Naive thymus-derived CD8-positive, alpha-beta T cell (primary cell): ENCODE measurements at regions of chr1 and their contacts with region 1.

Region 1: GRCh38 chr1:2545759-2546514 is 10.2 kb upstream of the TNFRSF14 start:
- DNase-seq: peak; percentile 83 to 93 (median 88)
- ATAC-seq: peak; percentile 47 to 54
- H3K4me3 Mint-ChIP-seq: peak overlapping the region; percentile 57 to 96 (median 92)
- H3K27ac Mint-ChIP-seq: peak overlapping the region in 6 of 10 donors; percentile 10 to 99 (median 98)
- H3K4me1 Mint-ChIP-seq: peaks cover 7 to 49% (median 37%) of the 10 kb centered on the region in 4 donors
- H3K27me3 Mint-ChIP-seq: no peaks in the 10 kb centered on the region

Region 2: DNA sequence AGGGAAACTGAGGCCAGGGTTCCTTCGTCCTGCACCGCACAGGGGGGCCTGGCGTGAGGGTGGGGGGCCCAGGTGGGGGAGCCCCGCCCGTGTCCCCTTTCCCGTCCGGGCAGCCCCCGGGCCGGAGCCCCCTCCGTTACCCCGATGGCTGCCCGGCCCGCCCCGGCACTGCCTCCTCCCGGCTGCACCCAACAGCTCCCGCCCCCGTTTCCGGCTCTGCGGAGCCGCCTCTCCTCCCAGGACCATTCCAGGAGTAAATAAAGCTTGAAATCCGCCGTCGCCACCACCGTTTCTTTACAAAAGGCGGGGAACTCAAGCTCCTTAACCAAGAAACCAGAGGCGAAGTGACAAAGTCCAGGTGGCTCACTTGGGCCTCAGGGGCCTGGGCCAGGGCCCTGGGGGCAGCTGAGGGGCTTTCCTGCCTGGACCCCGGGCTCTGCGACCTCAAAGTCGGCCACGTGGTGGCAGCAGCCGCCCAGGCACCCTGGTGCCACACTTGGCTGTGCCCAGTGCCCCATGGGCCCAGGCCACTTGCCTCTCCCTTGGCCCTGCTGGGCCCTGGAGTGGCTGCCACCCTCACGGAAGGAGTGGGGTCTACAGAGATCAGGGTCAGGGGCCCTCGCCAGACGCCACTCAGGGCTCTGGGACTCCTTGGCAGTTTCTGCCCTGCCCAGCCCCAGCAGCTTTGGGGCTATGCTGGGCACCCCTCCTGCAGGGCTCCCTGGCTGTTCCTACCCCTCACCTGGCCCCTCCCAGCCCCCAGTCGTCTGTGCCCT is 350.9 kb before region 1 on chr1:
- POLR2A ChIA-PET with region 1: interaction called, 29 read pairs
- DNase-seq: peak; percentile 81 to 100 (median 88)
- ATAC-seq: peak; percentile 81 to 82
- H3K4me3 Mint-ChIP-seq: peak overlapping the region; percentile 75 to 91 (median 85)
- H3K27ac Mint-ChIP-seq: peak overlapping the region; percentile 53 to 97 (median 92)
- H3K4me1 Mint-ChIP-seq: peaks cover 5 to 46% (median 33%) of the 10 kb centered on the region in 4 donors
- H3K27me3 Mint-ChIP-seq: no peaks in the 10 kb centered on the region

Region 3: GRCh38 chr1:2391041-2391930 is 154.7 kb before region 1 on chr1 and contains the starts of genes MORN1 and RER1:
- POLR2A ChIA-PET with region 1: interaction called, 16 read pairs
- DNase-seq: peak; percentile 90 to 100 (median 99)
- ATAC-seq: peak; percentile 95 to 96
- H3K4me3 Mint-ChIP-seq: peak within 1 kb of the TSS; percentile 82 to 94 (median 90)
- H3K27ac Mint-ChIP-seq: peak within 1 kb of the TSS; percentile 87 to 94 (median 92)
- H3K4me1 Mint-ChIP-seq: peaks cover 22 to 43% (median 37%) of the 10 kb centered on the region in 4 donors
- H3K27me3 Mint-ChIP-seq: no peaks in the 10 kb centered on the region
- polyA plus RNA-seq, gene MORN1: 4.3 to 7.1 (median 5.0) TPM
- polyA plus RNA-seq, gene RER1: 118 to 146 (median 126) TPM

Region 4: GRCh38 chr1:2494323-2494693 is 51.6 kb before region 1 on chr1:
- POLR2A ChIA-PET with region 1: interaction called, 25 read pairs
- DNase-seq: no peak
- ATAC-seq: no peak
- H3K4me3 Mint-ChIP-seq: peak overlapping the region in 7 of 10 donors; percentile 55 to 80 (median 72)
- H3K27ac Mint-ChIP-seq: peak overlapping the region; percentile 82 to 95 (median 92)
- H3K4me1 Mint-ChIP-seq: peaks cover 20 to 63% (median 38%) of the 10 kb centered on the region in 4 donors
- H3K27me3 Mint-ChIP-seq: no peaks in the 10 kb centered on the region

Region 5: GRCh38 chr1:2525920-2526823 is 19.8 kb before region 1 on chr1 and contains the start of gene PANK4:
- POLR2A ChIA-PET with region 1: interaction called, 528 read pairs
- DNase-seq: peak; percentile 79 to 91 (median 88)
- ATAC-seq: peak; percentile 77 to 85
- H3K4me3 Mint-ChIP-seq: peak within 1 kb of the TSS; percentile 88 to 99 (median 92)
- H3K27ac Mint-ChIP-seq: peak within 1 kb of the TSS; percentile 79 to 99 (median 96)
- H3K4me1 Mint-ChIP-seq: peaks cover 32 to 58% (median 49%) of the 10 kb centered on the region in 4 donors
- H3K27me3 Mint-ChIP-seq: peaks cover 0 to 6% (median 3%) of the 10 kb centered on the region in 5 donors
- polyA plus RNA-seq, gene PANK4: 9.0 to 31.7 (median 13.4) TPM

Region 6: DNA sequence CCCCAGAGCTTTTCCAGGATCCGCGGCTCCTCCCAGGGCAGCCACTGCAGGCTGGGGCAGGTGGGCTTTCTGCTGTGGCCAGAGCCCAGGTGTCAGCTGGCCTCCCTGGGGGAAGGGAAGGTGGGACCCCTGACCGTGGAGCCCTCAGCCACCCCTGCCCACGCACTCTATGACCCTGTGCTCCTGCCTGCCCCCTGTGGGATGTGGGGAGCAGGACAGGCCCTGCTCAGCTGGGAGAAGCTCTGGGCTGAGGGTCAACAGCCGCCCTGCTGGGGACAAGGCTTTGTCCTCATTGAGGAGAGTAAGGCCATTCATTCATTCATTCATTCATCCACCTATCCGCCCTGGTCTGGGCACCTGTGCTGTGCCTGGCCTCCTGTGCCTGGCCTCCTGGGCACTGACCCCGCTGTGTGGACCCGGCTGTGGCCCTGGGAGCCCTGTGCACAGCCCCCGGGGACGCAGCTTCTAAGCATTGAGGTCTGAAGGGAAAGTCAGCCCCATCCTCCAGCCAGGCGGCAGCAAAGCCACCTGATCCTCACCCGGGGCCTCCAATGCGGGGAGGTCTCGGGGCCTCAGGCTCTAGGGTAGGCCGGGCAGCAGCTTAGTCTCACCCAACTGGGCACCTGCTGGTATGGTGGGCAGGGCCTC is 16.1 kb after region 1 on chr1:
- POLR2A ChIA-PET with region 1: interaction called, 51 read pairs
- DNase-seq: peak in 1 of 10 donors; percentile 61
- ATAC-seq: peak; percentile 61 to 65
- H3K4me3 Mint-ChIP-seq: no peak overlapping the region
- H3K27ac Mint-ChIP-seq: peak overlapping the region in 4 of 10 donors; percentile 44 to 79 (median 48)
- H3K4me1 Mint-ChIP-seq: peaks cover 19 to 42% (median 31%) of the 10 kb centered on the region in 4 donors
- H3K27me3 Mint-ChIP-seq: no peaks in the 10 kb centered on the region

Region 7: GRCh38 chr1:2586154-2587070 is 40.5 kb after region 1 on chr1 and contains the start of gene PRXL2B:
- POLR2A ChIA-PET with region 1: interaction called, 139 read pairs
- DNase-seq: peak; percentile 91 to 100 (median 96)
- ATAC-seq: peak; percentile 57 to 65
- H3K4me3 Mint-ChIP-seq: peak within 1 kb of the TSS; percentile 88 to 96 (median 92)
- H3K27ac Mint-ChIP-seq: peak within 1 kb of the TSS; percentile 88 to 99 (median 97)
- H3K4me1 Mint-ChIP-seq: peaks cover 26 to 49% (median 42%) of the 10 kb centered on the region in 4 donors
- H3K27me3 Mint-ChIP-seq: no peaks in the 10 kb centered on the region
- polyA plus RNA-seq, gene PRXL2B: 20.6 to 37.5 (median 27.4) TPM